ENCODE measurements at regions of chr14 and their contacts with region 1.

Region 1: GRCh38 chr14:34875031-34875922 is at the start of gene BAZ1A:
- DNase-seq: peak; percentile 74
- ATAC-seq: peak; percentile 61
- total RNA-seq, gene BAZ1A: 4.9 TPM

Region 2: GRCh38 chr14:34982417-34983147 is 107.3 kb after region 1 on chr14 and contains the start of gene SRP54:
- intact Hi-C with region 1: loop called (anchors 5 kb)
- DNase-seq: peak; percentile 97
- ATAC-seq: peak; percentile 98
- total RNA-seq, gene SRP54: 28.6 TPM

Region 3: GRCh38 chr14:35365130-35366055 is 490.1 kb after region 1 on chr14:
- intact Hi-C with region 1: loop called (anchors 5 kb)
- DNase-seq: peak; percentile 49
- ATAC-seq: peak; percentile 76